Activated CD8-positive, alpha-beta T cell treated with anti-CD3 and anti-CD28 coated beads for 36 hours (primary cell): ENCODE measurements at regions of chr20 and their contacts with region 1.

Region 1: DNA sequence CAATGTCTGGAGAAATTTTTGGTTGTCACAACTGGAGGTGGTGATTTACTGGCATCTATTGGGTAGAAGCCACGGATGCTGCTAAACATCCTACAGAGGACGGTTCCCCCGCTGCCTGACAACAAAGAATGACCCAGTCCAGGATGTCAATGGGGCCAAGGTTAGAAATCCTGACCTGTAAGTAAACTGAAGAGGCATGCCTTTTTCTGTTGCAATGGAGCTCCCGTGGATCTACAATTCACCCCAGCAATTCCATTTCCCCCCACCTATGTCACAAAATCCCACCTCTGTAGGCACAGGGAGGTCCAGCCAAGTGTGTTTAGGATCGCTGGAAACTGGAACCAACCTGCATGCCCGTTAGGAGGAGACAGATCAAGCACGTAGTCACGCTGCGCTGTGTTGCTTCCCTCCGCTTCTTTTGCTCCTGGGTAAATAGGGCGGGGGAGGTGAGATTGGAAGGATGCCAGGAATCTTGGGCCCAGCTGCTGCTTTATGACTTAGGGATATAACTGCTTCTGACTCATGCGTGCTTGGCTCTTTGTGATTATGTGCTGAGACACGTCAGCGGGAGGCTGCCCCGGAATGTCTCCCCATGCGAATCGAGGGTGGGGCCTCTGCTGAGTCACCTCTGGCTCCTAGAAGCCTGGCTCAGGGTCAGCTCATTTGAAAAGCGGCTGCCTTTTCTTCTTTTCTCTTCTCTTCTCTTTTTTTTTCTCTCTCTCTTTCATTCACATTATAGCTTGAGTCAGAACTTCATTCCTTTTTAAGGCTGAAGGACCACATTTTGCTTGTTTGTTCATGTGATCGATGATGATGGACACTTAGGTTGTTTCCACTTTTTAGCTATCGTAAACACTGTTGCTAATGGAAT is 12.4 kb upstream of the PEDS1 start:
- DNase-seq: peak; percentile 95
- ATAC-seq: peak; percentile 98
- H3K4me3 Mint-ChIP-seq: peak overlapping the region; percentile 55
- H3K27ac Mint-ChIP-seq: peak overlapping the region; percentile 56
- H3K4me1 Mint-ChIP-seq: peaks cover 12% of the 10 kb centered on the region
- H3K27me3 Mint-ChIP-seq: peaks cover 4% of the 10 kb centered on the region
- CTCF ChIP-seq: no peak

Region 2: GRCh38 chr20:50085452-50086365 is 80.2 kb before region 1 on chr20:
- CTCF ChIA-PET with region 1: interaction called, 11 read pairs
- POLR2A ChIA-PET with region 1: no interaction called
- intact Hi-C with region 1: no loop called
- DNase-seq: peak; percentile 49
- ATAC-seq: peak; percentile 86
- H3K4me3 Mint-ChIP-seq: peak overlapping the region; percentile 9
- H3K27ac Mint-ChIP-seq: peak overlapping the region; percentile 52
- H3K4me1 Mint-ChIP-seq: peaks cover 29% of the 10 kb centered on the region
- H3K27me3 Mint-ChIP-seq: no peaks in the 10 kb centered on the region
- CTCF ChIP-seq: peak; percentile 77

Region 3: DNA sequence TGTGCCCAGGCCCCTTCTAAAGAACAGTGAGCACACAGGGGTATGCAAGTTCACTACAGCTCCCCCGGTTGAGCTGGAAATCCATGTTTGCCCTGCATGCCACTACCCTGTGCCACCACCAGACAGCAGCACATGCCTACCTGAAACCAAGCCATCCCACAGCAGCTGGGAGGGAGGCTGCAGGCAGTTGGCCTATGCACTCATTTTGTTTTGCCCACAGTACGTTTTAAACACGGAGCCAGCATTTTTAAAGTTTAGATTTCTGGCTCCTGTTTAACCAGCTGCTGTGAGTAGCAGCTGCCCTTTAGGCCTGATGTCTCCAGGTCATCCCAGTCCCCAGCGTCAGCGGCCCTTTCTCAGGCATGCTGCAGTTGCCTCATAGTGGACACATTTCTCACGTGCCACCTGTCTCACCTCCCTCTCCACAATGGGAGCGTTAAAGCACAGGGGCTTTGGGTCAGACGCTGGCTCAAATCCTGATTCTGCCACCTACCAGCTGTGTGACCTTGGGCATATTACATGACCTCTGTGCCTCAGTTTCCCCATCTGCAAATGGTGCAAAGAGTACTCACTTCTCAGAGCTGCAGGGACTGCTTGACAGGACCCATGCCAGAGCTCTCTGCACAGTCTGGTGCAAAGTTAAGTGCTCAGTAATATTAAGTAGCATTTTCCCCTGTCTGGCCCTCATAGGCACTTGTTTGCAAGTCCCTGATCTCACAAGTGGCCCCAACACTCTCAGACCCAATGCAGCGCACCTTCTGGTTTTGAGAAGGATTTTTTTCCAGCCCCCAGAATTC is 44.8 kb before region 1 on chr20:
- CTCF ChIA-PET with region 1: interaction called, 203 read pairs
- POLR2A ChIA-PET with region 1: interaction called, 3 read pairs
- intact Hi-C with region 1: loop called (anchors 2 kb)
- DNase-seq: peak; percentile 75
- ATAC-seq: peak; percentile 80
- H3K4me3 Mint-ChIP-seq: no peak overlapping the region
- H3K27ac Mint-ChIP-seq: no peak overlapping the region
- H3K4me1 Mint-ChIP-seq: peaks cover 8% of the 10 kb centered on the region
- H3K27me3 Mint-ChIP-seq: no peaks in the 10 kb centered on the region
- CTCF ChIP-seq: peak; percentile 70

Region 4: GRCh38 chr20:50146732-50147662 is 18.9 kb before region 1 on chr20:
- CTCF ChIA-PET with region 1: interaction called, 34 read pairs
- POLR2A ChIA-PET with region 1: no interaction called
- intact Hi-C with region 1: no loop called
- DNase-seq: peak; percentile 87
- ATAC-seq: peak; percentile 99
- H3K4me3 Mint-ChIP-seq: peak overlapping the region; percentile 71
- H3K27ac Mint-ChIP-seq: peak overlapping the region; percentile 98
- H3K4me1 Mint-ChIP-seq: peaks cover 56% of the 10 kb centered on the region
- H3K27me3 Mint-ChIP-seq: no peaks in the 10 kb centered on the region
- CTCF ChIP-seq: no peak

Region 5: DNA sequence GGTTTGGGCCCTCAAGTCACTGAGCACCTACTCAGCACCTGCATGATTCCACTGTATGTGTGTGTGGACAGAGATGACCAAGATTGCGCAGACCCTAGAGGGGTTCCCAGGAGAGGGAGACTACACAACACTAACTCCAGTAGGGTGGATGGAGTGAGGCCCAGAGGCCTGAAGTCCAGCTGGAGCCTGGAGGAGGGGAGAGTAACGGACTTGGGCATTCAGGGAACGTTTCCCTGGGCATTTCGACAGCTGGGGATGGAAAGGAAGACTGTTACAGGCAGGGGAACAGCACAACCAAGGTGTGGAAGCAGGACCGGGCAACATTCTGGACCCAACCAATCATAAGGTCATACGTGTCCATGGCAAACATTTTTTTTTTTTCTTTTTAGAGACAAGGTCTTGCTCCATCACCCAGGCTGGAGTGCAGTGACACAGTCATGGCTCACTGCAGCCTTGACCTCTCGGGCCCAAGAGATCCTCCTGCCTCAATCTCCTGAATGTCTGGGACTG is 13.6 kb after region 1 on chr20:
- CTCF ChIA-PET with region 1: interaction called, 11 read pairs
- POLR2A ChIA-PET with region 1: interaction called, 3 read pairs
- intact Hi-C with region 1: no loop called
- DNase-seq: no peak
- ATAC-seq: peak; percentile 20
- H3K4me3 Mint-ChIP-seq: no peak overlapping the region
- H3K27ac Mint-ChIP-seq: no peak overlapping the region
- H3K4me1 Mint-ChIP-seq: no peaks in the 10 kb centered on the region
- H3K27me3 Mint-ChIP-seq: peaks cover 5% of the 10 kb centered on the region
- CTCF ChIP-seq: peak; percentile 56